ENCODE measurements at regions of chr12 and their contacts with region 1.

Region 1: DNA sequence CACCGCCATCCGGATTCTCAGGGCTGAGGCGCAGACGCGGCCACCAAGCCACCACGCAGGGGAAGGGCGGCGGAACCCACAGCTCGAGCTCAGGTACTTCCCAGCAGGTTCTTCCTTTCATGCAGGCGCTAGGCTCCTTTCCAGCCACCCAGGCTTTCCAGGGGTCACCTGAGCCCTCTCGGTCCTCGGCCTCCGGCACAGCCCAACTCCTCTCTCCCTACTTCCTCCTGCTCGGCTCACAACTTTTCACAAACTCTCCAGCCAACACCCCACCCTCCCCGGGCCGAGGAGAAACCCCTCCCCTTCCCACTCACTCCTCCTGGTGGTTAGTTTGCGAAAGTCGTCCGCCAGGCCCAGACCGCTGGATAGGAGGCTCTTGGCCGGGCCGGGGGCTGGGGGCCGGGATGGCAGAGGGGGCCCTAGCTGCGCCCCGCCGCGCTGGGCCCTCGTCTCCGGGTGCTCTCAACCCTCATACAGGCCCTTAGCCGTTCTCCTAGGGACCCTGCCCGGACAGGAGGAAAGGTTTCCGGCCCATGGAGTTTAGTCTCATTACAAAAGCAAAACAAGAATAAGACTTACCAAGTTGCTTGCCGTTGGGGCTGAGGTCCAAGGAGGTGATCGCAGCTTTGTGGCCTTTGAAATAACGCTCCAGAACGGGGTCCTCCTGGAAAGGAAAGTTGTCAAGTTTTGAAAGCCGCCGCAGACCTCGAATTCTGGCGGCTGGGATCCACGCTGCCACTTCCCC is at the start of gene GALNT4:
- DNase-seq: peak; percentile 85 to 89
- H3K4me3 ChIP-seq: peak within 1 kb of the TSS; percentile 73 to 89 (median 79)
- H3K27ac ChIP-seq: peak within 1 kb of the TSS; percentile 88 to 91 (median 89)
- H3K4me1 ChIP-seq: peaks cover 16 to 33% of the 10 kb centered on the region in 2 donors
- H3K27me3 ChIP-seq: no peaks in the 10 kb centered on the region
- CTCF ChIP-seq: peak; percentile 45 to 70 (median 60)
- POLR2A ChIP-seq: peak in 1 of 2 donors; percentile 68
- total RNA-seq, gene GALNT4: 7.0 to 11.2 (median 7.3) TPM

Region 2: DNA sequence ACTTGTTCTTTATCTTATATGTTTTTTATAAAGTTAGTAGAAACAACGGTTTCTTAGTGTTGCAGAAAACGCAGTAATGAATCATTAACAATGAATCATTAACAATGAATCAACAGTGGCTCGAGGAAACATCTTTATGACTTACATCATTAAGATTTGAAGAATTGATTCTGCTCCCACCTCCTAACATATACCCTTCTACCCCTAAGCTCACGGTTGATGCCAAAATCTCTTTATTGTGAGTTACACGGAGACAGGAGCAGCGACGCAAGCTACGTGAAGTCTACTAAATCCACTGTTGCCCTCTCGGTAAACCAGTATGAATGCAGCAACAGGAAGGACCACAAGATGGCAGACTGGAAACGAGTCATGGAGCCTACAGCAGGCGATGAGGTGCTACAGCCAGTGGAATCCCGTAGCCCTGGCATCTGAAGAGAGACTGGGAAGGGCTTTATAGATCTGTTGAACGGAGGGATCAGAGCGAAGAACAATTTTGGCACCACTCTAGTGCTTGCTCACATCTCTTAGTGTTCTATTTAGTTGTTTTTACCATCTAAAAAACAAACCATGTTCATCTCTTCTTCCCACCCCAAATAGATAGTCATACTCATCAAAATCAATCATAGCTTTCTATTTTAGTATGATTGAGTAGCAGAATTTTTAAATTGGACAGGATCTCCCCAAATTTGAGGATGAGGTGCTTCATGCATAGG is 505.1 kb before region 1 on chr12:
- intact Hi-C with region 1: loop called (anchors 5 kb)
- DNase-seq: peak; percentile 66 to 72
- H3K4me3 ChIP-seq: no peak overlapping the region
- H3K27ac ChIP-seq: no peak overlapping the region
- H3K4me1 ChIP-seq: no peaks in the 10 kb centered on the region
- H3K27me3 ChIP-seq: no peaks in the 10 kb centered on the region
- CTCF ChIP-seq: peak in 5 of 6 experiments; percentile 68 to 82 (median 76)
- POLR2A ChIP-seq: no peak

Region 3: DNA sequence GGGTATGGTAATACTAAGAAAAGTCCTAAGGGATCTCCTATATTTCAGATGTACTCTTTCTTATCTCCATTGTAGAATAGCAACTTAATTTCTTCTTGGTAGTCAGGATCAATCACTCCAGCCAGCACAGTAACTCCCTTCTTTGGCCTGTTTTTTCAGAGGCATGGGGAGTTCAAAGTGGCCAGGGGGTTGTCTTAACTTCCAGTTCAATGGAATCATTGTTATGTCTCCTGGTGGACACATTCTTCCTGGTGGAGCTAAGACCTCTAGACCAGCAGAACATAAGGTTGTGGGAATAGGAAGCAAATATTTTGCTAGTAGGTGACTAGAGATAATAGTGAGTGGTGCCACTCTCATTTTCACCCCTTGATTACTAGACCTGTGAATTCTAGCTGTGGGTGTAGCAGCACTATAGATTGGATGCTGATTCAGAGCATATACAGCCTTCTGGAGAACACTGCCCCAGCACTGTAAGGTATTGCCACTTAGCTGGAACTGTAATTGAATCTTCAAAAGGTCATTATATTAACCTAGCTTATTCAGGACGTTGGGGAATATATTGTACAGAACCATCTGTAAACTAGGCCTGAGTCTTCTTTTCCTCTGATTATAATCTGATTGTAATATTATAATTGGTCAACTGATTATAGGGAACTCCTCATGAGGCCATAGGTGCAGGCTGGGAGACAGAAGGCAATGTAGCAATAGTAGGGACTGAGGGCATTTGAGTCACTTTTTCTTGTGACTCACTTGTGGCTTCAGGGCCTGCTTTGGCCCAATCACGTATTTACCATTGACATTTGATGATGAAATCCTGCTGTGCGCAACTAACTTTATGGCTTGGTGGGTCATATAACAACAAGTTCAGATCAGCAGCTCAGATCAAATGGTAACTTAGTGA is 244.1 kb after region 1 on chr12:
- intact Hi-C with region 1: no loop called
- DNase-seq: no peak
- H3K4me3 ChIP-seq: no peak overlapping the region
- H3K27ac ChIP-seq: no peak overlapping the region
- H3K4me1 ChIP-seq: no peaks in the 10 kb centered on the region
- H3K27me3 ChIP-seq: no peaks in the 10 kb centered on the region
- CTCF ChIP-seq: no peak
- POLR2A ChIP-seq: no peak